Calu3 (cell line): ENCODE measurements at regions of chr7 and their contacts with region 1.

Region 1: DNA sequence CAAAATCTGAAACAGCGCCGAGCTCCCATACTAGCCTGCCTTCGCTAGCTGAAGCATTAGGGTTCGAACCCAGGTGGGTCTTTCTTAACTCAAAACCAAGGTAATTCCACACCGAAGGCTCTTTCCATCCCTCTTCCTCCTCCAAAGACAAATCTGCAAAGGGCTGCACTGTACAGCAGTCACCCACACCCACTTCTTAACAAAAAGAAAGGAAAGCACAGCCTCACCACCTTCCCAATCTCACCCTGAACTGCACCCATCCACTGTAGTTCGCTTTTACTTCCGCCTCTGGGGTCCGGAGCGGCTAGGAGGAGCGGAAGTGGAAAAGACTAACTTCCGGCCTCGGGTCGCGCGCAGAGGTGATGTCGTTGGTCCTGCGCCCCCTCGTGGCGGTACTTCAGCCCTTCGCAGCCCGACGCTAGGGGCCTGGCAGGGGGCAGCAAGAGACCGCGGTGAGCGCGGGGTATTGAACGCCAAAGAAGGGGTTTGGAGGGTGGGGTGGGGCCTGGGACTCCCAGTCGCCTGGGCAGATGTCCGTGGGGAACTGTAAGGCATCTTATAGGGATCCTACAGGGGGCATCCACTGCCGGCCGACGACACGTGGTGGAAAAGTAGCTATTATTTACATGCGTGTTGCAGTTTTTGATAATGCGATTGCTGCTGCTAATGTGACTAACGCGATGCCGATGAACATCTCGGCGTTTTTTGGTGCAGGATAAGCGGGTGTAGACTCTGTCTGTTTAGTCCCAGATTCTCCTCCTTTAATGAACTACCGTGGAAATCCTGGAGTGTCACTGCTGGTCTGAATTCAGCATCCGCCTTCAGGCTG is at the start of gene MTERF1:
- DNase-seq: peak; percentile 89
- H3K4me3 Mint-ChIP-seq: peak within 1 kb of the TSS; percentile 91
- H3K27ac Mint-ChIP-seq: peak within 1 kb of the TSS; percentile 93
- H3K4me1 Mint-ChIP-seq: peaks cover 21% of the 10 kb centered on the region
- H3K27me3 Mint-ChIP-seq: no peaks in the 10 kb centered on the region
- CTCF ChIP-seq: peak; percentile 89
- total RNA-seq, gene MTERF1: 11.5 and 15.8 TPM in 2 replicates

Region 2: GRCh38 chr7:90931986-90932916 is 948.4 kb before region 1 on chr7:
- CTCF ChIA-PET with region 1: no interaction called
- intact Hi-C with region 1: no loop called
- DNase-seq: no peak
- H3K4me3 Mint-ChIP-seq: no peak overlapping the region
- H3K27ac Mint-ChIP-seq: no peak overlapping the region
- H3K4me1 Mint-ChIP-seq: no peaks in the 10 kb centered on the region
- H3K27me3 Mint-ChIP-seq: no peaks in the 10 kb centered on the region
- CTCF ChIP-seq: no peak

Region 3: DNA sequence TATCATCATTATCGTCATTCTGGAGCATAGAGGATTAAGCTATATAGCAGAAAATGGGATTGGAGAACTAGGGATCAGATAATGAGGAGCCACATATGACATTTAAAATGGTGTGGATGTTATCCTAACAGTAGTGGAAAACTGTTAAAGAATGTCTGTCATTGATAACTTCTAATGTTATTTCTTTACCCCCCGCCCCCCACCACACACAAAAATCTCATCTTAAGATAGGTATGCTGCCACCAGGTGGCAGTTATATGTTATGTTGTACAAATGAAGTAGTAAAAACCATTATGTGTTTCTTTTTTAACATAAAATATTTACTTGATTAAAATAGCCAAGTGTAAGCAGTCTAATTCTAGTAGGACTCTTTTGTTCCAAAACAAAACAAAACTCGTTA is 73.0 kb after region 1 on chr7:
- CTCF ChIA-PET with region 1: interaction called, 3 read pairs
- intact Hi-C with region 1: loop called (anchors 2 kb)
- DNase-seq: no peak
- H3K4me3 Mint-ChIP-seq: no peak overlapping the region
- H3K27ac Mint-ChIP-seq: no peak overlapping the region
- H3K4me1 Mint-ChIP-seq: peaks cover 19% of the 10 kb centered on the region
- H3K27me3 Mint-ChIP-seq: no peaks in the 10 kb centered on the region
- CTCF ChIP-seq: peak; percentile 19

Region 4: GRCh38 chr7:92043637-92044036 is 163.0 kb after region 1 on chr7:
- CTCF ChIA-PET with region 1: interaction called, 3 read pairs
- intact Hi-C with region 1: loop called (anchors 10 kb)
- DNase-seq: no peak
- H3K4me3 Mint-ChIP-seq: no peak overlapping the region
- H3K27ac Mint-ChIP-seq: no peak overlapping the region
- H3K4me1 Mint-ChIP-seq: peaks cover 9% of the 10 kb centered on the region
- H3K27me3 Mint-ChIP-seq: no peaks in the 10 kb centered on the region
- CTCF ChIP-seq: no peak